ENCODE measurements at regions of chr7 and their contacts with region 1.

Region 1: DNA sequence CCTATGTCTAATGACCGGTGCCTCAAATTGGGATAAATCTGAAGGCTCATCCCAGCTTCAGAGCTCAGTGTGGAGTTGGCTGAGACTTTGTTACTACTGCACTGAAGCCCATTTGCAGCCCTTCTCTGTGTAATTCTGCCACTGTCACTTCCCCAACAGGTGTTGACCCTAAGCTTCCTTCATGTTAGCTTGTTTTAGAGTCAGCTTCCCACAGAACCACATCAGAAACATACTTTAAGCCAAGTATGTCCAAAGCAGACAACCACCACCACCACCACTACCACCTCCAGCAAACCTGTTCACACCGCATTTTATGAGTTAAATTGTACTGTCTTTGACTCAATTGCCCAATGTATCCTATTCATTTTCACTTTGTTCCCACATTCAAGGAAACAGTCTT is 25.2 kb upstream of the GNAT3 start:
- DNase-seq: no peak
- ATAC-seq: no peak
- H3K4me3 ChIP-seq: no peak overlapping the region
- H3K27ac ChIP-seq: no peak overlapping the region
- H3K4me1 ChIP-seq: no peaks in the 10 kb centered on the region
- H3K27me3 ChIP-seq: no peaks in the 10 kb centered on the region
- CTCF ChIP-seq: no peak
- EP300 ChIP-seq: no peak
- POLR2A ChIP-seq: no peak
- RAD21 ChIP-seq: no peak

Region 2: GRCh38 chr7:80172387-80172786 is 364.7 kb before region 1 on chr7:
- CTCF ChIA-PET with region 1: no interaction called
- POLR2A ChIA-PET with region 1: no interaction called
- in situ Hi-C with region 1: no loop called
- intact Hi-C with region 1: loop called (anchors 5 kb)
- DNase-seq: no peak
- ATAC-seq: no peak
- H3K4me3 ChIP-seq: no peak overlapping the region
- H3K27ac ChIP-seq: no peak overlapping the region
- H3K4me1 ChIP-seq: no peaks in the 10 kb centered on the region
- H3K27me3 ChIP-seq: no peaks in the 10 kb centered on the region
- CTCF ChIP-seq: no peak
- EP300 ChIP-seq: no peak
- POLR2A ChIP-seq: no peak
- RAD21 ChIP-seq: no peak

Measured in HepG2 (cell line).